ENCODE measurements at regions of chr16 and their contacts with region 1.

Region 1: DNA sequence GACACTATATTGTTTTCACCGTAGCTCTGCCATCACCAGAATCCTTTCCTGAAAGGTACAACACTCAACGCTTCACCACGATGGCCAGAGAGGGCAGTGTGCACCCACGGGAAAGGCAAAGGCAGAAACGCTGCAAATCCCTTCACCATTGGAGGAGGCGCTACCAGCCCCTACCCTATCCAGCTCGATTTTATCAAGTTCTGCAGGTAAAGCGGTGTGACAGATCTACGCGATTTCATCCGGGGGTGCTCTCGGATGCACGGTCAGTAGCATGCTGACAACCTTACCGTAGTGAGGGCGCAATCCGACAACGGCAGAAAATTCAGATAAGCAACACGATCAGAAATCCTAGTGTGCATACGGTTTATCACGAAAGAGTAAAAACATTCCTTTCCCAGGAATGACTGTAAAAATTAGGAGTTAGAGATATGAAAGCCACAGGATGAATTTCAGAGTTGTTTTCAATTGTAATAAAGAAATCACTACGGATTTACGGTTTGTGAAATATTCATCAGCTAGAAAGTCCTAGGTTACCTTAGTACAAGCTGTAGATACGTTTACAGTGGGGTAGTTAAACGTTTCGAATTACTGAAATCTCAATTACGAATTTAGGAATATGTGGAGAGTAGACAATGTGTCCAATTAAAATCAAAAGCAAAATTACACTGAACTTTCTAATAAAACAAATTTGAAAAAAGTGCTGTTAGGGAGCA is 1.8 kb downstream of the NETO2 start:
- DNase-seq: peak; percentile 93
- H3K4me3 Mint-ChIP-seq: peak overlapping the region; percentile 75
- H3K27ac Mint-ChIP-seq: no peak overlapping the region
- H3K4me1 Mint-ChIP-seq: peaks cover 10% of the 10 kb centered on the region
- H3K27me3 Mint-ChIP-seq: peaks cover 38% of the 10 kb centered on the region

Region 2: DNA sequence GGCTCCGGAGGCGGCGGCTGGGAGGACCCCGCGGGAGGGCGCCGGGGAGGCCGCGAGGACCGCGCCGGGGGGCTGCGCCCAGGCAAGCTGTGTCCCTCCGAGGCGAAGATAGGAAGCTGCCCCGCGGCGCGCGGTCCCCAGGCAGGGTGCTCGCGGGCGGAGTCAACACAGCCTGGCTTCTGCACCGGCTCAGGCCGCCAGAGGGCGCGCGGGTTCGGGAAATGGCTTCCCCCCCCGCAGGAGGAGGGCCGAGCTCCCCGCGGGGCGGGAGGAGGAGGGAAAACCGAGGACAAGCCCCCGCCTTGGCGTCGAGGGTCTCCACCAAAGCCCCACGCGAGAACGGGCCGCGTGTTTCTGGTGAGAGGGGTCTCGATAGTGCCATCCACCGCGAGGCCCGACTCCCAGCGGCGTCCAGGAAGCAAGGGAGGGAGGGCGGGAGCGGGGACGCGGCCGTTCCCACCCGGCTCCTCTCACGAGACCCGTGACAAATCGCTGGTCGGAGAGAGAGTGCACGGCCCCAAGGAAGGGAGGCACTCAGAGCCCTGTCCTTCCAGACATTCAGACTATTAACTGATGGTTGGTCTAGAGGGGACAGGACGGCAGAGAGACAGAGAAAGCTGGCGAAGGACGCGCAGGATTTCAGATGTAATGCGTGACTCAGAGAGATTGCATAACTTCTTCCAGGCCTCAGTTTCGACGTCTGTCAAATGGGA is 104.0 kb before region 1 on chr16:
- CTCF ChIA-PET with region 1: interaction called, 38 read pairs
- intact Hi-C with region 1: loop called (anchors 1 kb)
- DNase-seq: peak; percentile 91
- H3K4me3 Mint-ChIP-seq: peak overlapping the region; percentile 74
- H3K27ac Mint-ChIP-seq: no peak overlapping the region
- H3K4me1 Mint-ChIP-seq: peaks cover 8% of the 10 kb centered on the region
- H3K27me3 Mint-ChIP-seq: peaks cover 10% of the 10 kb centered on the region

Region 3: GRCh38 chr16:47229053-47230050 is 87.4 kb after region 1 on chr16:
- CTCF ChIA-PET with region 1: no interaction called
- intact Hi-C with region 1: no loop called
- DNase-seq: no peak
- H3K4me3 Mint-ChIP-seq: no peak overlapping the region
- H3K27ac Mint-ChIP-seq: no peak overlapping the region
- H3K4me1 Mint-ChIP-seq: no peaks in the 10 kb centered on the region
- H3K27me3 Mint-ChIP-seq: no peaks in the 10 kb centered on the region

Region 4: GRCh38 chr16:47392081-47392480 is 250.2 kb after region 1 on chr16:
- CTCF ChIA-PET with region 1: interaction called, 3 read pairs
- intact Hi-C with region 1: loop called (anchors 10 kb)
- DNase-seq: peak; percentile 21
- H3K4me3 Mint-ChIP-seq: no peak overlapping the region
- H3K27ac Mint-ChIP-seq: no peak overlapping the region
- H3K4me1 Mint-ChIP-seq: peaks cover 20% of the 10 kb centered on the region
- H3K27me3 Mint-ChIP-seq: no peaks in the 10 kb centered on the region

Region 5: DNA sequence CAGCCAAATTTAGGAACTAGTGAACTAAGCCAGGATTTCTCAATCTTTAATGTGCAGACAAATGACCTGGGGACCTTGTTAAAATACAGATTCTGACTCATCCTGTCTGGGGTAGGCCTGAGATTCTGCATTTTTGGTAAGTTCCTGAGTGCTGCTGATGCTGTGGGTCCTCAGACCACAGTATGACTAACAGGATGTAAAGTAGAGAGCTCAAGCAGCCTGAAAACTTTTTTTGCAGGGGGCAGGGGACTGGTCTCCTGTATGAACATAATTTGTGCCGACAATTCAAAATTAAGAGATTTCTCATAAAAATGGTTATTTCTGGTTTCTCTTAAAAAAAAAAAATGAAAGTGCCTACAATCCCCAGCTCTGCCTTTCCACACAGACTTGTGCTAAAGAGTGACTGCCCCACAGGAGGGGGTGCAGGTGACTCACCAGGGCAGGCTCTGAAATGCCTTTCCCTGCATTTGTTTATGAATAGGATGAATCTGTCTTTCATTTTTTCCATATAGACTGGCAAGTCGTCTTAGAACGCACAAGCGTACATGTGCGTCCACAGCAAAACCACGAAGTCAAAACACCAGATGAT is 590.7 kb after region 1 on chr16:
- CTCF ChIA-PET with region 1: no interaction called
- intact Hi-C with region 1: no loop called
- DNase-seq: peak; percentile 28
- H3K4me3 Mint-ChIP-seq: no peak overlapping the region
- H3K27ac Mint-ChIP-seq: peak overlapping the region; percentile 16
- H3K4me1 Mint-ChIP-seq: peaks cover 4% of the 10 kb centered on the region
- H3K27me3 Mint-ChIP-seq: peaks cover 8% of the 10 kb centered on the region

Region 6: GRCh38 chr16:47928008-47928407 is 786.1 kb after region 1 on chr16:
- CTCF ChIA-PET with region 1: interaction called, 3 read pairs
- intact Hi-C with region 1: loop called (anchors 5 kb)
- DNase-seq: peak; percentile 5
- H3K4me3 Mint-ChIP-seq: no peak overlapping the region
- H3K27ac Mint-ChIP-seq: no peak overlapping the region
- H3K4me1 Mint-ChIP-seq: no peaks in the 10 kb centered on the region
- H3K27me3 Mint-ChIP-seq: peaks cover 7% of the 10 kb centered on the region

Region 7: GRCh38 chr16:48156790-48157209 is 1014.9 kb after region 1 on chr16:
- CTCF ChIA-PET with region 1: interaction called, 12 read pairs
- intact Hi-C with region 1: loop called (anchors 1 kb)
- DNase-seq: peak; percentile 91
- H3K4me3 Mint-ChIP-seq: no peak overlapping the region
- H3K27ac Mint-ChIP-seq: no peak overlapping the region
- H3K4me1 Mint-ChIP-seq: peaks cover 26% of the 10 kb centered on the region
- H3K27me3 Mint-ChIP-seq: peaks cover 26% of the 10 kb centered on the region

Region 8: DNA sequence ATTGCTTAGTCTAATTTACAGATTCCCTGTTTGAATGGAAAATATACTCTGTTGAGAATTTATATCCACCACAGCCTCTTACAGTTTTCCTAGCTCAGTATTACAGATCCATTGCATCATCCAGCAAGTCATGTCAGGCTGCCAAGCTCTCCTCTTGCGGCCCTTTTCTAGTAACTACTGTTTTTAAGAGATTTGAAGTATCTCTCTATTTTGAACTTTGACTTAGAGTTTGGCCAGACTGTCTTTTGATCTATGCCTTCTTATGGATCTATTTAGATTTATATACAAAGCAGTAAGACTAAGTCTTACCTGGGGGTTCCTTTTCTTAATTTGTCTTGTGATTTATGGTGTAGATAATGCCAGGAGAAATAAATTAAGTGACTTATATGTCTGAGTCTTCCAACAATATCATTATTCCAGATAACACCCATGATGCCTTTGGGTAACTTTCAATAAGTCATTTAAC is 1158.5 kb after region 1 on chr16:
- CTCF ChIA-PET with region 1: no interaction called
- intact Hi-C with region 1: no loop called
- DNase-seq: peak; percentile 12
- H3K4me3 Mint-ChIP-seq: no peak overlapping the region
- H3K27ac Mint-ChIP-seq: peak overlapping the region; percentile 79
- H3K4me1 Mint-ChIP-seq: peaks cover 14% of the 10 kb centered on the region
- H3K27me3 Mint-ChIP-seq: no peaks in the 10 kb centered on the region

Region 9: GRCh38 chr16:48632137-48632774 is 1490.3 kb after region 1 on chr16:
- CTCF ChIA-PET with region 1: no interaction called
- intact Hi-C with region 1: loop called (anchors 1 kb)
- DNase-seq: no peak
- H3K4me3 Mint-ChIP-seq: no peak overlapping the region
- H3K27ac Mint-ChIP-seq: no peak overlapping the region
- H3K4me1 Mint-ChIP-seq: peaks cover 11% of the 10 kb centered on the region
- H3K27me3 Mint-ChIP-seq: peaks cover 3% of the 10 kb centered on the region

Measured in activated naive CD4-positive, alpha-beta T cell treated with anti-CD3 and anti-CD28 coated beads for 36 hours (primary cell).